ENCODE measurements at regions of chr2 and their contacts with region 1.

Region 1: GRCh38 chr2:50143822-50144575 is 887.9 kb downstream of the NRXN1 start:
- DNase-seq: no peak
- ATAC-seq: peak; percentile 57
- H3K4me3 ChIP-seq: peak overlapping the region; percentile 36; the same call in 1 of the 2 replicates
- H3K27ac ChIP-seq: no peak overlapping the region
- H3K4me1 ChIP-seq: no peaks in the 10 kb centered on the region
- H3K27me3 ChIP-seq: no peaks in the 10 kb centered on the region
- CTCF ChIP-seq: peak; percentile 51
- POLR2A ChIP-seq: no peak
- RAD21 ChIP-seq: peak; percentile 46; the same call in 1 of the 2 replicates

Region 2: DNA sequence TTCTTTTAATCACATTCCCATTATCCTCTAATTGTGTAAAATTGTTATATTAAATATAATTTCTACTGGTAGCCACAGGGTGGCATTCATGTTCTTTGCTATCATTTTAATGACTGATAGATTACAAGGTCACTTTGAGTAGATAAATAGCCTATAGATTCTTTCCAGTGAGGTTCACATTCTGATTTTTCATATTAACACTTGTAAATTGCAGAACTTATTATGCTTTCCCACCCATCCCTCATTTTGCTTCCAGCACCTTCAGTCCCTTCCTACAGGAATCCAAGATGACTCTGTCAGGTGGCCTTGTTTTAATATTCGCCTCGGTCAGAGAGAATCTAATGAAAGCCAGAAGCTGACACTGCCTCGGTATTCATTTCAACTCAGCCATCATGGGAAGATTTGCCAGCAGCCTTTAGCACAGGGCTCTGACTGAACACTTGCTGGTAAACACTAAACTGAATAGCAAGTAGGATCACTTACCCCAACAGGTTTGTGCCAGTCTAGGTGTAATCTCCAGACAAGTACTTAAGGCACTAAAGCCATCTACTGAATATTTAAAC is 888.5 kb before region 1 on chr2:
- CTCF ChIA-PET with region 1: no interaction called
- POLR2A ChIA-PET with region 1: no interaction called
- dilution Hi-C with region 1: no loop called
- in situ Hi-C with region 1: no loop called
- intact Hi-C with region 1: loop called (anchors 5 kb)
- DNase-seq: no peak
- ATAC-seq: no peak
- H3K4me3 ChIP-seq: no peak overlapping the region
- H3K27ac ChIP-seq: no peak overlapping the region
- H3K4me1 ChIP-seq: no peaks in the 10 kb centered on the region
- H3K27me3 ChIP-seq: no peaks in the 10 kb centered on the region
- CTCF ChIP-seq: peak; percentile 23; the same call in 1 of the 2 replicates
- POLR2A ChIP-seq: no peak
- RAD21 ChIP-seq: peak; percentile 24; the same call in 1 of the 2 replicates

Region 3: DNA sequence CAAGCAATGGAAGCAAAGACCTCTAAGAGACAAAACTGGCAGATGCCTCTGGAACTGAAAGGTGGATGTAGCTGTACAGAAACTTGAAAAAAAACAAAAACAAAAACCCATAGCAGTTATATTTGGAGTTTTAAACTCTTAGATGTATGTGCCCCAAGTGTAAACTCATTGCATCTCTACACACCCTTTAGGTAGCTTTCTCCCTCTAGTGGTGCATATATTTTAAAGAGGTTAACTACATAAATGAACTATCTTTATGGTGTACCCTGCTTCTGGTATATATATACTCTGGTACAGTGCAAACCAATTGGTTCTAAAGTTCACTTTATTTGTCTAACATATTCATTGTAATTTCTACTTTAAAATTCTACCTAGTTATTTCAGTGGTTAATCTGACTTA is 369.7 kb after region 1 on chr2:
- CTCF ChIA-PET with region 1: no interaction called
- POLR2A ChIA-PET with region 1: no interaction called
- dilution Hi-C with region 1: no loop called
- in situ Hi-C with region 1: no loop called
- intact Hi-C with region 1: no loop called
- DNase-seq: no peak
- ATAC-seq: no peak
- H3K4me3 ChIP-seq: no peak overlapping the region
- H3K27ac ChIP-seq: no peak overlapping the region
- H3K4me1 ChIP-seq: no peaks in the 10 kb centered on the region
- H3K27me3 ChIP-seq: no peaks in the 10 kb centered on the region
- CTCF ChIP-seq: no peak
- POLR2A ChIP-seq: no peak
- RAD21 ChIP-seq: no peak